ENCODE measurements at regions of chr12 and their contacts with region 1.

Region 1: DNA sequence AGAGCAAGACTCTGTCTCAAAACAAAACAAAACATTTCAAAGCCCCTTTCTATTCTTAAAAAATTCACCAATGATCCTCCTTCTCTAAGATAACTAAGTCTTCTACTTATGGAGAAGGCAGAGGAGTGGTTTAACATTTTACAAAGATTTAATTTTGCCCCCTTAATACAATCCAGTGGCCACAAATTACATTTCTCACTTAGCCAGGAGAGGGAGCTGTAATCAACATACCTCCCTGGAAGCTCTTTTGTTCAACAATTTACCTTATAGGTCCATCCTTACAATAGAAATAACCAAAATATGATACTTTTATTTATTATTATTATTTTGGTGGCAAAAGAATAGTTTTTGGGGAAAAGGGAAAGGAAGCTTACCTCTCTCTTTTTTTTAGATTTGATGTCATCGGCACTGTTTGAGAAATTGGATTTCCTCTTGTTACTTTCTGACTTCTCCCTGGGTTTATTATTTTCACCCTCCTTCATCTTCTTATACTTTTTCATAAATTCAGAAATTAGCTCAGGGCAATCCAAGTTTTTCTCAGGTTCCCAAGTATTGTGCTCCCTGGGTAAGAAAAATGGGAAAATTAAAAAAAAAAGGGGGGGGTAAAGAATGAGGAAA is 28.1 kb downstream of the CBX5 start:
- DNase-seq: no peak
- H3K4me3 ChIP-seq: no peak overlapping the region
- H3K27ac ChIP-seq: no peak overlapping the region
- H3K27me3 ChIP-seq: no peaks in the 10 kb centered on the region
- CTCF ChIP-seq: peak; percentile 76

Region 2: GRCh38 chr12:54229624-54230212 is 22.1 kb before region 1 on chr12:
- CTCF ChIA-PET with region 1: interaction called, 24 read pairs
- POLR2A ChIA-PET with region 1: interaction called, 5 read pairs
- DNase-seq: peak; percentile 92
- H3K4me3 ChIP-seq: no peak overlapping the region
- H3K27ac ChIP-seq: peak overlapping the region; percentile 82
- H3K27me3 ChIP-seq: no peaks in the 10 kb centered on the region
- CTCF ChIP-seq: no peak

Region 3: DNA sequence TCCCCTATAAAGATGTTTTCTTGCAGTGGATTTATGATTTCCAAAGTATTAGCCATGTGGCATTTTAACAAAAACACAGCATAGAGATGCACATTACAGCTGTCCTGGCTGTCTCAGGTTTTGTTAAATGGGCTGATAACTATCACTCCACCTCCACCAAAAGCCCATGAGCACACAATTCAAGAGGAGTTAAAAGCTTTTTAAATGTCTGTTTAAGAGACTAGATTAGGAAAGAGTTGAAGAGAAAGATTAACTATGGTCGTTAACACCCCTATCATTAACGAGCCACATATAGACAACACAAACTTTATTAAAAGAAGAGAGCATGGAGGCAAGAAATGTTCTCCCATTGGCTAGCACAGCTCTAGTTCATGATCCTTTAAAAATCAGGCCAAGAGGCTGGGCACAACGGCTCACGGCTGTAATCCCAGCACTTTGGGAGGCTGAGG is 13.6 kb after region 1 on chr12:
- CTCF ChIA-PET with region 1: interaction called, 37 read pairs
- POLR2A ChIA-PET with region 1: interaction called, 5 read pairs
- DNase-seq: no peak
- H3K4me3 ChIP-seq: no peak overlapping the region
- H3K27ac ChIP-seq: no peak overlapping the region
- H3K27me3 ChIP-seq: no peaks in the 10 kb centered on the region
- CTCF ChIP-seq: no peak

Region 4: DNA sequence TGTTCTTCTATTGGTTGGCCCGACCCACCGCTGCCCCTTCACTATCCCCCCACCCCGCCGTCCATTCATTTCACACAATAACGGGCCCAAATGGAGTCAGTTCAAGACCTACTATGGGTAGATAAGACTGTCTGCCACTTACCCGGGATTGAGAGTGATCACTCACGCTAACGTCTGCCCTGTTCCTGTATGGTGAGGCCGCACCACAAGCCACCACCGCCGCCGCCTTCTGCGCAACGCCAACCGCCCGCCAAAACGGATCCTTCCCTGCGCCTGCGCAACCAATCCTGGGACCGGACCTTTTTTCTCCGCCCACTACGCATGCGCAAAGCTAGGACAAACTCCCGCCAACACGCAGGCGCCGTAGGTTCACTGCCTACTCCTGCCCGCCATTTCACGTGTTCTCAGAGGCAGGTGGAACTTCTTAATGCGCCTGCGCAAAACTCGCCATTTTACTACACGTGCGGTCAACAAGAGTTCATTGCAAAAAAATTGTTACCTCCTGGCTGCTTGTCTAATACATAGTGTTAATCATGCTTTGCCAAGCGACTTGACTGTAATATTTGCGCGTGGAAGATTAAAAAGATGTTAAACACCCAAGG is 28.2 kb after region 1 on chr12 and contains the start of gene CBX5:
- CTCF ChIA-PET with region 1: interaction called, 26 read pairs
- POLR2A ChIA-PET with region 1: interaction called, 12 read pairs
- DNase-seq: peak; percentile 99
- H3K4me3 ChIP-seq: peak within 1 kb of the TSS; percentile 93
- H3K27ac ChIP-seq: peak within 1 kb of the TSS; percentile 87
- H3K27me3 ChIP-seq: no peaks in the 10 kb centered on the region
- CTCF ChIP-seq: no peak
- polyA plus RNA-seq, gene CBX5: 49.0 and 62.3 TPM in 2 replicates

Region 5: GRCh38 chr12:54359033-54359761 is 107.4 kb after region 1 on chr12:
- CTCF ChIA-PET with region 1: interaction called, 15 read pairs
- POLR2A ChIA-PET with region 1: interaction called, 4 read pairs
- DNase-seq: peak; percentile 99
- H3K4me3 ChIP-seq: peak overlapping the region; percentile 65
- H3K27ac ChIP-seq: peak overlapping the region; percentile 97
- H3K27me3 ChIP-seq: no peaks in the 10 kb centered on the region
- CTCF ChIP-seq: no peak